CD4-positive, alpha-beta T cell (primary cell): ENCODE measurements at regions of chr1 and their contacts with region 1.

Region 1: DNA sequence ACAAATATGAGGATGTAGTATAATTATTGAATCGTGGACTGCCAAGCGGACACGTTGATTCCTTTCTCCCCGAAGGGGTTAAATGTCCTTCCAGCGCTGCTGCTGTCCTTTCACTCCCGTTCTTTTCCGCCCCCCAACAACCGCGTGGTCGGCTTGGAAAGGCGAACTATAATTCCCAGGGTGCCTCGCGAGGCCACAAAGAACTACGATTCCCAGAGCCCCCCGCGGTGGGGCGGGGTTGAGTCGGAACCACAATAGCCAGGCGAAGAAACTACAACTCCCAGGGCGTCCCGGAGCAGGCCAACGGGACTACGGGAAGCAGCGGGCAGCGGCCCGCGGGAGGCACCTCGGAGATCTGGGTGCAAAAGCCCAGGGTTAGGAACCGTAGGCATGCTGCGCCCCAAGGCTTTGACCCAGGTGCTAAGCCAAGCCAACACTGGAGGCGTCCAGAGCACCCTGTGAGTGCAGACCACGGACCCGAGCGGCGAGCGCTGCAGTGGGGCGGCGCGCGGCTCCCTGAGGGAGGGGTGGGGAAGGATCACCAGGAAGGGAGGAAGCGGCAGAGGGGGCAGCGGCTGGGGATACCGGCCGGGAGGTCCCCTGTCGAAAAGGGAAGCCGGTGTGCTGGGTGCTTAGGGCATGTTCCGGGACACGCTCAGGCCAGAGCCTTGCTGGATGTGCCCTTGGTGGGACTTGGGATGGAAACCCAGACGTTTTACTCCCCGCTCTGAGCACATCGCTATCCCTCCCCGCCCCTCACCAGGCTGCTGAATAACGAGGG is at the start of gene LAMTOR2:
- DNase-seq: peak; percentile 86 to 97 (median 94)
- ATAC-seq: peak; percentile 83
- H3K4me3 ChIP-seq: peak within 1 kb of the TSS; percentile 100
- H3K4me3 Mint-ChIP-seq: peak within 1 kb of the TSS; percentile 94
- H3K27ac ChIP-seq: peak within 1 kb of the TSS; percentile 82 to 87
- H3K27ac Mint-ChIP-seq: peak within 1 kb of the TSS; percentile 89
- H3K4me1 ChIP-seq: peaks cover 34% of the 10 kb centered on the region
- H3K4me1 Mint-ChIP-seq: peaks cover 40% of the 10 kb centered on the region
- H3K27me3 ChIP-seq: no peaks in the 10 kb centered on the region
- H3K27me3 Mint-ChIP-seq: no peaks in the 10 kb centered on the region
- CTCF ChIP-seq: no peak
- total RNA-seq, gene LAMTOR2: 7.0 to 8.7 TPM

Region 2: DNA sequence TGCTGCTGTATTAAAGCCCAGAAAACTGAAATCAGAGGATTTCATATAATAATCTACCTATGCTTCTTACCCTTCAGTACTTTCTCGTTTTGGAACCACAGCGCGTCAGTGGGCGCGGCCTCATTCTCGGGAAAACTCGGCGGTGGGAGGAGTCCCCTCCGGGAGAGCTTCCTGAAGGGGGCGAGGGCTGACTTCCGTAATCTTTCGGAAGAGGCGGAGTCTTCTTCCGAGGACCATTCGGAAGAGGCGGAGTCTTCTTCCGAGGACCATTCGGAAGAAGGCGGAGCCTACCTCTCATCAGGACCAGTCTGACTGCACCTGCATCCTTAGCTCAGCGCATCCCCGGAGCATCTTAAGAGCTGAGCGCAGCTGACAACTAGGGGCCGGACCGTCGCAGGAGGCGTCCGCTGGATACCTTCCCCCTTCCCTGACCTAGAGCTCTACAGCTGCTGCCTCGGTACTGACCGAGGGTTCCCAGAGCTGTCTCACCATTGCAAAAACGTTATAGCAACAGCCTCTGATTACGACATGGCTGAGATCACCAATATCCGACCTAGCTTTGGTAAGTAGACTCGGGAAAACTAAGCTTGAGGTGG is 195.4 kb before region 1 on chr1 and contains the start of gene SYT11:
- CTCF ChIA-PET with region 1: no interaction called
- POLR2A ChIA-PET with region 1: no interaction called
- intact Hi-C with region 1: loop called in 1 of 2 experiments (anchors 5 kb)
- DNase-seq: peak; percentile 83 to 97 (median 92)
- ATAC-seq: peak; percentile 89
- H3K4me3 ChIP-seq: peak within 1 kb of the TSS; percentile 62
- H3K4me3 Mint-ChIP-seq: peak within 1 kb of the TSS; percentile 93
- H3K27ac ChIP-seq: peak within 1 kb of the TSS; percentile 42 to 81
- H3K27ac Mint-ChIP-seq: peak within 1 kb of the TSS; percentile 81
- H3K4me1 ChIP-seq: peaks cover 38% of the 10 kb centered on the region
- H3K4me1 Mint-ChIP-seq: peaks cover 33% of the 10 kb centered on the region
- H3K27me3 ChIP-seq: peaks cover 0 to 8% of the 10 kb centered on the region in 2 experiments
- H3K27me3 Mint-ChIP-seq: peaks cover 25% of the 10 kb centered on the region
- CTCF ChIP-seq: no peak
- total RNA-seq, gene SYT11: 6.1 to 6.3 TPM

Region 3: GRCh38 chr1:155934097-155934935 is 120.4 kb before region 1 on chr1 and contains the start of gene KHDC4:
- CTCF ChIA-PET with region 1: interaction called, 3 read pairs
- POLR2A ChIA-PET with region 1: interaction called, 4 read pairs
- intact Hi-C with region 1: loop called (anchors 1 to 5 kb)
- DNase-seq: peak; percentile 88 to 99 (median 93)
- ATAC-seq: peak; percentile 93
- H3K4me3 ChIP-seq: peak within 1 kb of the TSS; percentile 82
- H3K4me3 Mint-ChIP-seq: no peak within 1 kb of the TSS
- H3K27ac ChIP-seq: peak within 1 kb of the TSS; percentile 86 to 95
- H3K27ac Mint-ChIP-seq: no peak within 1 kb of the TSS
- H3K4me1 ChIP-seq: peaks cover 42% of the 10 kb centered on the region
- H3K4me1 Mint-ChIP-seq: peaks cover 38% of the 10 kb centered on the region
- H3K27me3 ChIP-seq: no peaks in the 10 kb centered on the region
- H3K27me3 Mint-ChIP-seq: no peaks in the 10 kb centered on the region
- CTCF ChIP-seq: no peak
- total RNA-seq, gene KHDC4: 56.6 to 60.8 TPM

Region 4: DNA sequence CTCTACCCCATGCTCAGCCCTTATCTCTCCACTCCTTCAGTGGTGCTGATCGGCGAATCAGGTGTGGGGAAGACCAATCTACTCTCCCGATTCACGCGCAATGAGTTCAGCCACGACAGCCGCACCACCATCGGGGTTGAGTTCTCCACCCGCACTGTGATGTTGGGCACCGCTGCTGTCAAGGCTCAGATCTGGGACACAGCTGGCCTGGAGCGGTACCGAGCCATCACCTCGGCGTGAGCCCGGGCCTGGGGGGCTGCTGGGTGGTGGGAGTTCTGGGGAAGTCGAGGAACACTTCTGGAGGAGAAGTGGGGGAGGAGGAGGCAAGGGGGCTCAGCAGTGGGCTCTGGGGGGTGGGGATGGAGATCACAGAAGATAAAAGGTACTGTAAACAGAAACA is 11.2 kb after region 1 on chr1:
- CTCF ChIA-PET with region 1: interaction called, 11 read pairs
- POLR2A ChIA-PET with region 1: no interaction called
- intact Hi-C with region 1: no loop called
- DNase-seq: no peak
- ATAC-seq: no peak
- H3K4me3 ChIP-seq: no peak overlapping the region
- H3K4me3 Mint-ChIP-seq: no peak overlapping the region
- H3K27ac ChIP-seq: no peak overlapping the region
- H3K27ac Mint-ChIP-seq: no peak overlapping the region
- H3K4me1 ChIP-seq: peaks cover 6% of the 10 kb centered on the region
- H3K4me1 Mint-ChIP-seq: peaks cover 6% of the 10 kb centered on the region
- H3K27me3 ChIP-seq: no peaks in the 10 kb centered on the region
- H3K27me3 Mint-ChIP-seq: no peaks in the 10 kb centered on the region
- CTCF ChIP-seq: no peak

Region 5: GRCh38 chr1:156193488-156194299 is 139.0 kb after region 1 on chr1 and contains the start of gene SLC25A44:
- CTCF ChIA-PET with region 1: no interaction called
- POLR2A ChIA-PET with region 1: no interaction called
- intact Hi-C with region 1: loop called in 1 of 2 experiments (anchors 1 kb)
- DNase-seq: peak; percentile 92 to 99 (median 97)
- ATAC-seq: peak; percentile 98
- H3K4me3 ChIP-seq: peak within 1 kb of the TSS; percentile 91
- H3K4me3 Mint-ChIP-seq: peak within 1 kb of the TSS; percentile 95
- H3K27ac ChIP-seq: peak within 1 kb of the TSS; percentile 74 to 78
- H3K27ac Mint-ChIP-seq: peak within 1 kb of the TSS; percentile 84
- H3K4me1 ChIP-seq: peaks cover 37% of the 10 kb centered on the region
- H3K4me1 Mint-ChIP-seq: peaks cover 39% of the 10 kb centered on the region
- H3K27me3 ChIP-seq: no peaks in the 10 kb centered on the region
- H3K27me3 Mint-ChIP-seq: no peaks in the 10 kb centered on the region
- CTCF ChIP-seq: peak; percentile 46
- total RNA-seq, gene SLC25A44: 11.6 to 13.0 TPM

Region 6: GRCh38 chr1:156740679-156741612 is 686.3 kb after region 1 on chr1 and contains the start of gene MRPL24:
- CTCF ChIA-PET with region 1: no interaction called
- POLR2A ChIA-PET with region 1: no interaction called
- intact Hi-C with region 1: loop called in 1 of 2 experiments (anchors 5 kb)
- DNase-seq: peak; percentile 92 to 100 (median 96)
- ATAC-seq: peak; percentile 89
- H3K4me3 ChIP-seq: peak within 1 kb of the TSS; percentile 74
- H3K4me3 Mint-ChIP-seq: peak within 1 kb of the TSS; percentile 94
- H3K27ac ChIP-seq: peak within 1 kb of the TSS; percentile 82 to 86
- H3K27ac Mint-ChIP-seq: peak within 1 kb of the TSS; percentile 89
- H3K4me1 ChIP-seq: peaks cover 28% of the 10 kb centered on the region
- H3K4me1 Mint-ChIP-seq: peaks cover 40% of the 10 kb centered on the region
- H3K27me3 ChIP-seq: no peaks in the 10 kb centered on the region
- H3K27me3 Mint-ChIP-seq: no peaks in the 10 kb centered on the region
- CTCF ChIP-seq: no peak
- total RNA-seq, gene MRPL24: 11.7 to 11.9 TPM